ENCODE measurements at regions of chr6 and their contacts with region 1.

Region 1: DNA sequence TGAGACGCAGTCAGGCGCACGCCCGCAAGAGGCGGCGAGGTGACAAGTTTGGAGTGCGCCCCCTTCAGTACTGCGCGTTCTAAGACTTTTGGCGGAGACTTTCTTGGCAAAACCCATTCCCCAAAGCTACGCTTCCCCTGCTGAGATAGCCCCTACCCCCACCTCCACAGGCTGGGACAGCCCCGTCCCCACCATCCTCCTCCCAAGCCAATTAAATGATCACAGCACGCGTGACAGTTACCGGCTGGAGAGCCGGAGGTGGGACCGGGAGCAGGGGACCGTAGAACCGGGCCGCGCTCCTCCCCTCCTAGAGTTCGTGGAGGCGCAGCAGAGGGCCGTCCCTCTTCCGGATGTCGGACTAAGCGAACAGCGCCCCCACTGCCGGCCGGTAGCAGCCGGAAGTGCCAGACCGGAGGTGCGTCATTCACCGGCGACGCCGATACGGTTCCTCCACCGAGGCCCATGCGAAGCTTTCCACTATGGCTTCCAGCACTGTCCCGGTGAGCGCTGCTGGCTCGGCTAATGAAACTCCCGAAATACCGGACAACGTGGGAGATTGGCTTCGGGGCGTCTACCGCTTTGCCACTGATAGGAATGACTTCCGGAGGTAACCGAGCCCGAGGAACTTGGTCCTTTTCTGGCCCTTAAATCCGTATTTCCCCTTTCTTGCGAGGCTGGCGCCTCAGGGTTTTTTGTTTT is at the start of gene TOMM6:
- DNase-seq: peak; percentile 70 to 94
- ATAC-seq: peak; percentile 87 to 90
- H3K4me3 ChIP-seq: peak within 1 kb of the TSS; percentile 65
- H3K27ac ChIP-seq: peak within 1 kb of the TSS; percentile 85 to 97
- H3K4me1 ChIP-seq: peaks cover 14% of the 10 kb centered on the region
- CTCF ChIP-seq: peak; percentile 74
- EP300 ChIP-seq: no peak
- POLR2A ChIP-seq: peak; percentile 63
- RAD21 ChIP-seq: no peak
- polyA plus RNA-seq, gene TOMM6: 217 and 262 TPM in 2 replicates

Region 2: DNA sequence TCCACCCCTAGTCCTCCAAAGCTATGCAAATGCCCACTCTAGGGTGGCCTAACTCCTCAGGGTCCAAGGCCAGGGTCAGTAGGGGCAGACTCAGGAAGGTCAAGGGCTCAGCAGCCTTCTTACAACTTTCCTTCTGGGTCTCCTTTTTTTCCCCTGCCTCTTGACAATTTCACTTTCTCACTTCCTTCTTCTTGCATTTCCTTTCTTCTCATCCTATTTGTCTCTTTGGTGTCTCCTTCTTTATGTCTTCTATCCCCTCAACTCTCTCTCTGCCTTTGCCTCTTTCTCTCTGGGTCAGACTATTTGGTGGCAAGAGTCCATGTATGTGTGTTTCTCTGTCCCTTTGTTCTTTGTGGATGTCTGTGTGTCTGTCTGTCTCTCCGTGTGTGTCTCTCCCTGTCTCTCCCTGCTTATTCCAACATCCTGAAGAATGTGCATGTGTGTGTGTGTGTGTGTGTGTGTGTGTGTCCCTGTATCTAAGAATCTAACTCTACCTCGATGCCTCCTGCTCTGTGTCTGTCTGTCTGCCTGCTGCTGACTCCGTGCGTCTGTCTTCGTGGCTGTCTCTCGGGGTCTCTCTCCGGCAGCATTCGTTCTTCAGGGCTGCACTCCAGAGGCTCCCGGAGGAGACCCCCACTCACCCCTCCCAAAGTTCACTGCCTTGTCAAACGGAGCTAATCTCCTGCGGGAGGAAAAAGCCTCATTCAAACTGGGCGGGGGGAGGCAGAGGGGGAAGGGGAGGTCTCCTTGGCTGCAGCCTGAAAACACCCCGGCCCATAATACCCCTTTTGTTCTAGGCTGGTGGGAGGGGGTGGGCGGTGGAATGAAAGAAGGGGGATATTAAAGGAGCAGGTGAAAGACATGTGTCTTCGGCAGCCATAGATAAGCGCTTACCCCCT is 292.9 kb before region 1 on chr6:
- CTCF ChIA-PET with region 1: no interaction called
- POLR2A ChIA-PET with region 1: no interaction called
- DNase-seq: no peak
- ATAC-seq: no peak
- H3K4me3 ChIP-seq: no peak overlapping the region
- H3K27ac ChIP-seq: no peak overlapping the region
- H3K4me1 ChIP-seq: no peaks in the 10 kb centered on the region
- CTCF ChIP-seq: no peak
- EP300 ChIP-seq: no peak
- POLR2A ChIP-seq: no peak
- RAD21 ChIP-seq: no peak

Region 3: DNA sequence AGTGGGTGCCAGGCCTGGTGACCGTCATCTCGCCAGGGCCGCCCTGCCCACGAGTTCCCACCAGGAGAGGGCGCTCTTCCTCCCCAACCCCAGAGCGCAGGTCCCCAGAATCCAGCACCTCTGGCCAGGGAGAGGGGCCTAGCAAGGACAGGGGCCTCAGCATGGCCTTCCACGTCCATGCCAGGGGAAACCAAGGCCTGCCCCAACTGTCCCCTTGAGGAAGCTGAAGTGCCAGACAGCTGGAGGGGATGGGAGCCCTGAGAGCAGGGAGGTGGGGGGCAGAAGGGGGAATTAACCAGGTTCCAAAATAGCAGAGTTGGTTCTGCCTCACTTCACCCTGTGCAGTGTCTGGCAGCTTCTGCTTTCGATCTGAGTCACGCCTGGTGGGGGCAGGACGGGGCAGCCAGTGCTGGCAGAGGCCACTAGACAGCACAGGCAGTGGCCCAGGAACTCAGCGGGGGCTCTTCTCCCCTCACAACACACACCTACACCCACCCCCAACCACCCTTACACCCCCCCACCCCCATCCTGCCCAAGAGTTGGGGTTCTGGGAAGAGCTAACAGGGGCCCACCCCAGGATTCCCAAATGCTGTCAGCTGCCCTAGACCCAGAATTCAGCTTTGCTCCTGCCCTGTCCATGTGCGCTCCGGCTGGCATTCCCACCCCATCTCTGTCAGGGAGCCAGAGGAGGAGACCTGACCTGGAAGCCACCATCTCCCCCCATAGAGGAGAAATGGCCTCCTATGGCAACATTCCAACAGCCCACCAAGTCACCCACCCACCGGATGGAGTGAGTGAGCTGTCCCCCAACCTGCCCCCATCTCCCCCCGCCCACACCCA is 81.2 kb before region 1 on chr6:
- CTCF ChIA-PET with region 1: interaction called, 20 read pairs
- POLR2A ChIA-PET with region 1: no interaction called
- DNase-seq: peak; percentile 69 to 78
- ATAC-seq: peak; percentile 90 to 96
- H3K4me3 ChIP-seq: no peak overlapping the region
- H3K27ac ChIP-seq: peak overlapping the region; percentile 85 to 97
- H3K4me1 ChIP-seq: peaks cover 32% of the 10 kb centered on the region
- CTCF ChIP-seq: peak; percentile 66
- EP300 ChIP-seq: no peak
- POLR2A ChIP-seq: no peak
- RAD21 ChIP-seq: peak; percentile 61 to 66

Region 4: GRCh38 chr6:41775293-41776181 is 11.8 kb before region 1 on chr6:
- CTCF ChIA-PET with region 1: interaction called, 39 read pairs
- POLR2A ChIA-PET with region 1: no interaction called
- DNase-seq: peak; percentile 74 to 82
- ATAC-seq: peak; percentile 52 to 74; a peak in 5 of 6 replicates
- H3K4me3 ChIP-seq: no peak overlapping the region
- H3K27ac ChIP-seq: no peak overlapping the region
- H3K4me1 ChIP-seq: peaks cover 7% of the 10 kb centered on the region; the same call in 2 of the 3 replicates
- CTCF ChIP-seq: peak; percentile 66
- EP300 ChIP-seq: no peak
- POLR2A ChIP-seq: no peak
- RAD21 ChIP-seq: peak; percentile 70 to 84

Region 5: DNA sequence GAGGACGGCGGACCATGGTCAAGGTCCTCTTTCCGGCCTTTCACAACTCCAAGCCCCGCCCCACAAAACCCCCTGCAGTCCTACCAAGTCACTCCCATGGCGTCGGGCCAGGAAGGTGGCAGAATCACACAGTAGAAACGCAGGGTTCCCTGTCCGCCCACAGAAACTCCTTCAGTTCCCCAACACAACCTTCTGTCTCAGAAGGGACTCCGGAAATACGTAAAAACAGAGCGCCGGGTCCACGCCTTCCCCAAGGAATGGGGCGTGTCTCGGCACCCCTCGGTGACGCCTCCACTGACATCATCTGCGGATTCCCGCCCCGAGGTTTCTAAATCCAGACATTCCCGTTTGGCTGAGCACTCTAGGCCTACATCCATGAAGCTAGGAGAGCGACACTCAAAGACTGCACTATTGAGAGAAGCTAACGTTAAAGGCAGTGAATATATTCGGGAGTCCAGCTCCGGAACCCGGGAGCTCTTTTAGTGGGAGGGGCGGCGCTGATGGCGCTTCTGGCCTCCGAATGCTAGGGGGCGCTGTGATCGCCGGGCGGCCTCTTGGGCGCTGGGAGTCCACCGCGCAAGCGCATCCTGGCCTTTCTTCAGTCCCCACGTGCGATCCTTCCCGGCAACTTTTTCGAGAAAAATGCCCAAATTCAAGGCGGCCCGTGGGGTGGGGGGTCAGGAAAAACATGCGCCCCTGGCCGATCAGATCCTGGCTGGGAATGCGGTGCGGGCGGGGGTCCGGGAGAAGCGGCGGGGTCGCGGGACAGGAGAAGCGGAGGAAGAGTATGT is 133.7 kb after region 1 on chr6 and contains the starts of genes BYSL and MED20:
- CTCF ChIA-PET with region 1: interaction called, 22 read pairs
- POLR2A ChIA-PET with region 1: interaction called, 18 read pairs
- DNase-seq: peak; percentile 86 to 97
- ATAC-seq: peak; percentile 88 to 94
- H3K4me3 ChIP-seq: peak within 1 kb of the TSS; percentile 80
- H3K27ac ChIP-seq: peak within 1 kb of the TSS; percentile 99
- H3K4me1 ChIP-seq: peaks cover 49% of the 10 kb centered on the region
- CTCF ChIP-seq: peak; percentile 81
- EP300 ChIP-seq: no peak
- POLR2A ChIP-seq: no peak; the same call in 1 of the 2 replicates
- RAD21 ChIP-seq: no peak
- polyA plus RNA-seq, gene BYSL: 28.8 and 38.7 TPM in 2 replicates
- polyA plus RNA-seq, gene MED20: 29.3 and 32.9 TPM in 2 replicates

Region 6: GRCh38 chr6:42028234-42029061 is 241.1 kb after region 1 on chr6:
- CTCF ChIA-PET with region 1: interaction called, 11 read pairs
- POLR2A ChIA-PET with region 1: no interaction called
- DNase-seq: peak; percentile 62 to 72
- ATAC-seq: peak; percentile 76 to 88
- H3K4me3 ChIP-seq: no peak overlapping the region
- H3K27ac ChIP-seq: peak overlapping the region; percentile 89 to 90
- H3K4me1 ChIP-seq: peaks cover 31% of the 10 kb centered on the region
- CTCF ChIP-seq: no peak
- EP300 ChIP-seq: no peak
- POLR2A ChIP-seq: no peak
- RAD21 ChIP-seq: no peak

Region 7: DNA sequence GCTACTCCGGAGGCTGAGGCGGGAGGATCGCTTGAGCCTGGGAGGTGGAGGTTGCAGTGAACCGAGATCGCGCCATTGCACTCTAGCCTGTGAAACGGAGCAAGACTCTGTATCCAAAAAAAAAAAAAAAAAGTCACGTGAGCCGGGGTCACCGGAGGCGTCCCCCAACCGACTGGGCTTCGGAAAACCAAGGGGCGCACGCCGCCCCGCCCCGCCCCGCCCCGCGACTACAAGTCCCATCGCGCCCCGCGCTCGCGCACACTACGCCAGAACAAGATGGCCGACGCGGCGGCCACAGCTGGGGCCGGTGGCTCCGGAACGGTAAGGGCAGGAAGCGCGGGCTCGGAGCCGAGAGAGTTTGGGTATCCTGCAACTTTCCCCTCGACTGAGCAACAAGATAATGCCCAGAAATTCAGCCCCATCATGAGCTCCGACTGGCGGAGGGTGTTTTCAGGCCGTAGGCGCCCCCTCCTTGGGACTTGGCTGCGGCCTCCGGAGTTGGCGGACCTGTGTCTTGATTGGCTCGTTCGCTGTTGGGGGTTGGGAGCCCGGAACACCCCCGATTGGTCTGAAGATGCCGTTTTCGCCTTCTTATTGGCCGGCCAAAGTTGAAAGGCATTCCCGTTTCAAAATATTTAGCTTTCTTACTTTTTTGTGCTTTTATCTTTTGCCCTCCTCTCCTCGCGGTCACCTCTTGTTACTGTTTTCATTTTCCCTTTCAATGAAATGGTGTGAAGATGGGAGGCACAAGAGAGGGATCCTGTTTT is 263.1 kb after region 1 on chr6 and contains the start of gene TAF8:
- CTCF ChIA-PET with region 1: interaction called, 111 read pairs
- POLR2A ChIA-PET with region 1: interaction called, 7 read pairs
- DNase-seq: peak; percentile 86 to 88
- ATAC-seq: peak; percentile 88 to 91
- H3K4me3 ChIP-seq: peak within 1 kb of the TSS; percentile 52
- H3K27ac ChIP-seq: peak within 1 kb of the TSS; percentile 93 to 96
- H3K4me1 ChIP-seq: peaks cover 33% of the 10 kb centered on the region
- CTCF ChIP-seq: no peak
- EP300 ChIP-seq: no peak
- POLR2A ChIP-seq: peak; percentile 98
- RAD21 ChIP-seq: no peak
- polyA plus RNA-seq, gene TAF8: 18.7 and 20.5 TPM in 2 replicates